Tibial artery (tissue), 4 donors: ENCODE measurements at regions of chr5 and their contacts with region 1.

Region 1: GRCh38 chr5:60148356-60148755 is 254.8 kb upstream of the PDE4D start:
- DNase-seq: no peak
- H3K4me3 ChIP-seq: no peak overlapping the region
- H3K27ac ChIP-seq: no peak overlapping the region
- H3K4me1 ChIP-seq: peaks cover 0 to under 1% (median 0%) of the 10 kb centered on the region in 4 donors
- H3K27me3 ChIP-seq: no peaks in the 10 kb centered on the region
- CTCF ChIP-seq: no peak

Region 2: GRCh38 chr5:59412428-59412827 is 735.9 kb before region 1 on chr5:
- intact Hi-C with region 1: no loop called
- DNase-seq: no peak
- H3K4me3 ChIP-seq: no peak overlapping the region
- H3K27ac ChIP-seq: no peak overlapping the region
- H3K4me1 ChIP-seq: no peaks in the 10 kb centered on the region
- H3K27me3 ChIP-seq: no peaks in the 10 kb centered on the region
- CTCF ChIP-seq: no peak

Region 3: GRCh38 chr5:60077292-60077691 is 71.1 kb before region 1 on chr5:
- intact Hi-C with region 1: loop called (anchors 10 kb)
- DNase-seq: no peak
- H3K4me3 ChIP-seq: no peak overlapping the region
- H3K27ac ChIP-seq: no peak overlapping the region
- H3K4me1 ChIP-seq: no peaks in the 10 kb centered on the region
- H3K27me3 ChIP-seq: no peaks in the 10 kb centered on the region
- CTCF ChIP-seq: no peak